ENCODE measurements at regions of chr7 and their contacts with region 1.

Region 1: GRCh38 chr7:135575296-135575695 is 17.6 kb downstream of the NUP205 start:
- H3K4me3 Mint-ChIP-seq: no peak overlapping the region
- H3K27ac Mint-ChIP-seq: no peak overlapping the region
- H3K4me1 Mint-ChIP-seq: peaks cover 5% of the 10 kb centered on the region
- H3K27me3 Mint-ChIP-seq: no peaks in the 10 kb centered on the region

Region 2: GRCh38 chr7:135620980-135621850 is 45.9 kb after region 1 on chr7:
- intact Hi-C with region 1: loop called (anchors 10 kb)
- H3K4me3 Mint-ChIP-seq: no peak overlapping the region
- H3K27ac Mint-ChIP-seq: no peak overlapping the region
- H3K4me1 Mint-ChIP-seq: no peaks in the 10 kb centered on the region
- H3K27me3 Mint-ChIP-seq: no peaks in the 10 kb centered on the region